CD14-positive monocyte (primary cell): ENCODE measurements at regions of chr2 and their contacts with region 1.

Region 1: DNA sequence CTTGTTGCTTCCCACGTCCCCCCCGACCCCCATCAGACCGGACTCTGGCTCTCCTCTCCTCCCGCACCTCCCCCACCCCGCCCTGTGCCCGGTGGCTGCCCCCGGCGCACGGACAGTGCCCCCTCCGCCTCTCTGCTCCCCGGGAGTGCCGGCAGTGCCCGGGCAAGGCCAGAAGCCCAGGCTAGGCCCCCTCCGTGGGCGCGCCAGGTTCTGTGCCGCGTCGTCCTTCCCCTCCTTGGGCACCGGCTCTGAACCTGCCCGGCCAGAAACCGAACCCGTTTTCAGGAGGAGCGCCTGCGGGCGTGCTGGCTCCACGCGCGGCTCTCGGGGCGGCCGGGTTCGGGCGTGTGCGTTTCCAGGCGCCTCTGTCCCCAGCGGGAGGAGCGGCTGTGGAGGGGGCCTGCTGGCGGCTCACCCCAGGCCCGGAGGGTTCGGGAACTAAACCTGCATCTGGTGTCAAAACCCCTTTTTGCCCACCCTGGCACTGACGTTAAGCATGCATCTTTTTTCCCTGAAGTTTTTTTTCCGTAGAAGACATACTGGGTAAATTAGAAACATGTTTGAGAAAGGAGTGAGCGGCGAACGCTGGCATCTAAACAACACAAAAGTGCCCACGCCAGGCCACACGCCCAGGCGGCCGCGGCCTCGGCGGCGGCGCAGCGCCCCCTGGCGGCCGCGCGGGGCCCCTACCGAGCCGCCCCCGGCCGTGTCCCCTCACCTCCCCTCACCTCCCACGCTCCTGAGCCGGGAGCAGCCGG is 123.9 kb upstream of the SLC1A4 start:
- DNase-seq: peak; percentile 56 to 72 (median 69)
- H3K4me3 ChIP-seq: peak overlapping the region; percentile 51 to 75 (median 59)
- H3K4me3 Mint-ChIP-seq: peak overlapping the region; percentile 80 to 87
- H3K27ac ChIP-seq: peak overlapping the region; percentile 74 to 98
- H3K27ac Mint-ChIP-seq: peak overlapping the region in 4 of 7 donors; percentile 80 to 89 (median 84)
- H3K4me1 ChIP-seq: peaks cover 51 to 52% of the 10 kb centered on the region in 2 donors
- H3K4me1 Mint-ChIP-seq: peaks cover 14% of the 10 kb centered on the region
- H3K27me3 ChIP-seq: no peaks in the 10 kb centered on the region
- H3K27me3 Mint-ChIP-seq: peaks cover 0 to 9% (median 0%) of the 10 kb centered on the region in 3 donors
- CTCF ChIP-seq: peak; percentile 96

Region 2: DNA sequence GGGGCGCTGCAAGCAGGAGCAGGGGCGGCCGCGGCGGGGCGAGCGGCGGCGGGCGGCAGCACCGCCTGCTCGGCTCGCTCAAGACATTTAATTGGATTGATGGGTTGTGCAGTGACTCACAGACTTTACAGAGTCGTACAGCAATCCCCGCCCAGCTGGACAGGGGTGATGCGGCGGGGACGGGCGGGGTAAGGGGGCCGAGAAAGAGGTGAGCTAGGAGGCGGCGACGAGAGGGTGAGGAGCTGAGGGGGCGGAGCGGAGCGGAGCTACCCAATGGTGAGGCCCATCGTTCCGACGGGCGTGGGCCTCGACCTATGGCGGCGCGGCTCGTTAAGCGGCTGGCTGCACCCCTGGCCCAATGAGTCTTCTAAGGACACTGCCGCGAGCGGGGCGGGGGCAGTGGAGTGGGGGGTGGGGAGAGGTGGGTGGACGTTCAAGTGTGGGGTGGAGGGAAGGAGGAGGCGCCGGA is 114.4 kb before region 1 on chr2:
- intact Hi-C with region 1: loop called (anchors 1 to 5 kb)
- DNase-seq: peak; percentile 100
- H3K4me3 ChIP-seq: peak overlapping the region; percentile 85 to 98 (median 97)
- H3K4me3 Mint-ChIP-seq: peak overlapping the region; percentile 93 to 99
- H3K27ac ChIP-seq: peak overlapping the region; percentile 99 to 100
- H3K27ac Mint-ChIP-seq: peak overlapping the region; percentile 98 to 100 (median 99)
- H3K4me1 ChIP-seq: peaks cover 36 to 39% of the 10 kb centered on the region in 2 donors
- H3K4me1 Mint-ChIP-seq: peaks cover 32% of the 10 kb centered on the region
- H3K27me3 ChIP-seq: no peaks in the 10 kb centered on the region
- H3K27me3 Mint-ChIP-seq: no peaks in the 10 kb centered on the region
- CTCF ChIP-seq: no peak

Region 3: GRCh38 chr2:64831134-64831976 is 33.9 kb before region 1 on chr2:
- intact Hi-C with region 1: loop called (anchors 2 to 5 kb)
- DNase-seq: peak; percentile 97 to 100 (median 98)
- H3K4me3 ChIP-seq: peak overlapping the region in 1 of 3 experiments; percentile 47
- H3K4me3 Mint-ChIP-seq: peak overlapping the region; percentile 54 to 63
- H3K27ac ChIP-seq: peak overlapping the region; percentile 80 to 95
- H3K27ac Mint-ChIP-seq: peak overlapping the region; percentile 94 to 99 (median 96)
- H3K4me1 ChIP-seq: peaks cover 21 to 39% of the 10 kb centered on the region in 2 donors
- H3K4me1 Mint-ChIP-seq: peaks cover 40% of the 10 kb centered on the region
- H3K27me3 ChIP-seq: no peaks in the 10 kb centered on the region
- H3K27me3 Mint-ChIP-seq: peaks cover 0 to 6% (median 4%) of the 10 kb centered on the region in 3 donors
- CTCF ChIP-seq: peak; percentile 91